ENCODE measurements at regions of chr12 and their contacts with region 1.

Region 1: GRCh38 chr12:50187084-50187900 is 20.1 kb upstream of the CERS5 start:
- DNase-seq: no peak
- ATAC-seq: peak; percentile 51 to 59

Region 2: DNA sequence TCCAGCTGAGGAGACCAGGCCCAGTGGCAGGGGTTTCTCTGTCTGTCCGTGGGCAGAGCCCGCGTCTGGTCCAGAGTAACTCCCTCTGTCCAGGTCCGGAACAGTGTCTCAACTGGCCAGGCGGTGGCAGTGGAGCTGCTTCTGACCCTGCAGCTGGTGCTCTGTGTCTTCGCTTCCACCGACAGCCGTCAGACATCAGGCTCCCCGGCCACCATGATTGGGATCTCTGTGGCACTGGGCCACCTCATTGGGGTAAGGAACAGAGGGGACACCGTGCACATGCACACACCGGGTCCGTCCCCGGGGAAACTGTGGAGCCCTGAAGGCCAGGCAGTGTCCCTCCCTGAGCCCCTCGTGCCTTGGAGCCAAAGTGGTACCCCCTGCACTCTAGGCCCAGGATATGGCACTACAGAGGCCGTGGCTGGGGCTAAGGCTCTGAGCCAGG is 213.0 kb before region 1 on chr12:
- intact Hi-C with region 1: loop called in 1 of 2 experiments (anchors 10 kb)
- DNase-seq: peak; percentile 79
- ATAC-seq: peak; percentile 87 to 89

Region 3: GRCh38 chr12:50257686-50258551 is 70.6 kb after region 1 on chr12:
- intact Hi-C with region 1: no loop called
- DNase-seq: peak; percentile 42
- ATAC-seq: peak; percentile 78 to 87